CD4-positive, alpha-beta memory T cell (primary cell): ENCODE measurements at regions of chr1 and their contacts with region 1.

Region 1: DNA sequence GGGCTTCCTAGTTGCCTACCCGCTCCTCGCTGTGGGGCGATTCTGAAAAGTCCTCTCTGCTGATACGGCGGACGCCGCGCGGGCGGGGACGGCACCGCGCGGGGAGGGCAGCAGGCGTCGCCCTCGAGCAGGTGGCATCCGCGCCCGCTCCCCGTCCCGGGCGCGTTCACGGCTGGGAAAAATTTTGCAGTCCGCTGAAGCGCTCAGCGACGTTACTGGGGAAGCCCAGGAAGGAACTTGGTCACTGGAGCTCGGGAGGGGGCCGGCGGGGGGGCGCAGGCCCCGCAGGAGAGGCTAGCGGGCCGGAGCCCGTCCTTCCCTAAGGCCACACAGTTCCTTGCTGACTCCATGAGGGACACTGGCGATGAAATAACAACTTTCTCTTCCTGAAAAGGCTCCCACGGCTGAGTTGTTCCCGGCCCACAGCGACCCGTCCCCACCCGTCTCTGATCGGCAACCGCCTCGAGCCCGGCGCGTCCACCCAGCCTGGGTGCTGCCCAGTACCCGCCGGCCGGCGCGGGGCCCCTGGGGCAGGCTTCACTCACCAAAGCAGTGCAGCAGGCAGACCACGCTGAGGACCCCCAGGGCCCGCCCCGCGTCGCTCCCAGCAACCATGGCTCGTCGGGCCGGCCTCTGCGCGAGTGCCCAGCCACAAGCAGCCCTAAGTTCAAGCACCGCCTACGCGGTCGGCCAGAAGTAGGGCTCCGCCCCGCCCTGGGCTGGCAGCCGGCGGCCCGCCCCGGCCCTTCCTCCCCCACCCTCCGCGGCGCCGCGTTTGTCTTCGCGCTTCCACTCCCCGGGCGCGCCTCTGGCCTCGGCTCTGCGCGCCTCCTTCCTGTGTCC is at the start of gene CD58:
- DNase-seq: peak; percentile 74 to 81 (median 75)
- H3K4me3 ChIP-seq: peak within 1 kb of the TSS; percentile 80 to 93
- H3K4me3 Mint-ChIP-seq: peak within 1 kb of the TSS; percentile 89 to 99 (median 94)
- H3K27ac ChIP-seq: peak within 1 kb of the TSS; percentile 93
- H3K27ac Mint-ChIP-seq: peak within 1 kb of the TSS; percentile 90 to 98 (median 97)
- H3K4me1 ChIP-seq: peaks cover 62% of the 10 kb centered on the region
- H3K4me1 Mint-ChIP-seq: peaks cover 35 to 64% (median 49%) of the 10 kb centered on the region in 4 donors
- H3K27me3 ChIP-seq: no peaks in the 10 kb centered on the region
- H3K27me3 Mint-ChIP-seq: peaks cover 0 to 2% of the 10 kb centered on the region in 2 donors
- total RNA-seq, gene CD58: 25.2 to 30.9 TPM

Region 2: DNA sequence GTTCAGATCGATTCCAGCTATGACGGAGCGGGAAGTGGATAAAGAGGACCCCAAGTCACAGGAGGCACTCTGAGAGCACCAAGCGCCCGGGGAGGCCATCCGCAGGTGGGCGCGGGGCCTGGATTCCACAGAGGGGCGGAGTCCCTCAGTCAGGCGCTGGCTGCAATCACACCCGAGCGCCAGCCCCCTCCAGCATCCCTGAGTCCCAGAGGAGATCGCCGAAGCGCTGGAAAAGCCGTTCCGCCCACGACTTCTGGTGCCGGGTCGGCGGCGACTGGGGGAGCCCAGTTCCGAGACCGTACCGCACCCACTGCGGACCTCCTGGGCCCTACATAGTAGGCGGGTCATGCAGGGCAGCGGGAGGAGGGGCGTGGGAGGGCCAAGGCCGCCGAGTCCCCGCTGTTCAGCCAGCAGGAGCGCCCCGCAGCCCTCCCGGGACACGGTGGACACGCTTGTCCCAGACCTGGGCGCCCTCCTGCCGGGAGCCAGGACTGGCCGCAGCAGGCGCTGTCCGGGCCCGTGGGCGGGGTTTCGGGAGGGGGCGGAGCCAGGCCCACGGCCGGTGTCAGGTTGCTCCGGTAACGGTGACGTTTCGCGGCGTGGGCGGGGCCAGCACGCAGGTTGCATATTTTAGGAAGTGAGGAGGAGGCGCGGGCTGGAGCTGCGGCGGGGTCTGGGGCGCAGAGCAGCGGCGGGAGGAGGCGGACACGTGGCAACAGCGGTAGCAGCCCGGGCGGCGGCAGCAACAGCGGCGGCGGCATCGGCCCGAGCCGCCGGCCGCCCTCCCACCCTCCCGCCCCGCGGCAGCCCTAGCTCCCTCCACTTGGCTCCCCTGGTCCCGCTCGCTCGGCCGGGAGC is 197.8 kb before region 1 on chr1 and contains the start of gene ATP1A1:
- CTCF ChIA-PET with region 1: no interaction called
- POLR2A ChIA-PET with region 1: interaction called, 5 read pairs
- intact Hi-C with region 1: loop called (anchors 2 kb)
- DNase-seq: peak; percentile 96 to 97 (median 96)
- H3K4me3 ChIP-seq: peak within 1 kb of the TSS; percentile 82 to 96
- H3K4me3 Mint-ChIP-seq: peak within 1 kb of the TSS; percentile 95 to 99 (median 98)
- H3K27ac ChIP-seq: peak within 1 kb of the TSS; percentile 71
- H3K27ac Mint-ChIP-seq: peak within 1 kb of the TSS; percentile 92 to 99 (median 97)
- H3K4me1 ChIP-seq: peaks cover 49% of the 10 kb centered on the region
- H3K4me1 Mint-ChIP-seq: peaks cover 27 to 55% (median 38%) of the 10 kb centered on the region in 4 donors
- H3K27me3 ChIP-seq: no peaks in the 10 kb centered on the region
- H3K27me3 Mint-ChIP-seq: peaks cover 1% of the 10 kb centered on the region in 2 donors
- total RNA-seq, gene ATP1A1: 251 to 256 TPM

Region 3: GRCh38 chr1:116504308-116505156 is 66.0 kb before region 1 on chr1:
- CTCF ChIA-PET with region 1: interaction called, 19 read pairs
- POLR2A ChIA-PET with region 1: interaction called, 23 read pairs
- intact Hi-C with region 1: loop called (anchors 1 kb)
- DNase-seq: peak; percentile 85 to 98 (median 89)
- H3K4me3 ChIP-seq: no peak overlapping the region
- H3K4me3 Mint-ChIP-seq: peak overlapping the region in 7 of 8 donors; percentile 17 to 75 (median 67)
- H3K27ac ChIP-seq: peak overlapping the region; percentile 86
- H3K27ac Mint-ChIP-seq: peak overlapping the region; percentile 91 to 98 (median 94)
- H3K4me1 ChIP-seq: peaks cover 78% of the 10 kb centered on the region
- H3K4me1 Mint-ChIP-seq: peaks cover 48 to 86% (median 63%) of the 10 kb centered on the region in 4 donors
- H3K27me3 ChIP-seq: no peaks in the 10 kb centered on the region
- H3K27me3 Mint-ChIP-seq: no peaks in the 10 kb centered on the region

Region 4: DNA sequence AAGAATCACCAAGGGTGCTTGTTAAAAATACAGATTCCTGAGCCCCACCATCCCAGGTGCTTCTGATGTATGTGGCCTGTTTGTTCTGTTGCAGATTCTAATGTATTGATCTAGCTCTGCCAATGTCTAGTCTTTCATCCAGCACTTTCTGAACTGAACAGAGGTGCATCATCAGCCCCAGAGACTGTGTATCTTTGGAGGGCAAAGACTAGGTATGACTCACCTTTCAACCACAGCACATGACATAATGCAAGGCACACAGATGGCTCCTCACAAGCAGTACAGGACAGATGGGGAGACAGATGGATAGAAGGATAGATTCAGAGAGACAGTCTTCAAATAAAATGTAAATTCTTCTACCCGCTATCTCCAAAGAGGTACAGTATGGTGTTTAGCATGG is 32.0 kb before region 1 on chr1:
- CTCF ChIA-PET with region 1: interaction called, 5 read pairs
- POLR2A ChIA-PET with region 1: no interaction called
- intact Hi-C with region 1: loop called (anchors 5 kb)
- DNase-seq: peak in 1 of 5 donors; percentile 67
- H3K4me3 ChIP-seq: no peak overlapping the region
- H3K4me3 Mint-ChIP-seq: no peak overlapping the region
- H3K27ac ChIP-seq: no peak overlapping the region
- H3K27ac Mint-ChIP-seq: peak overlapping the region in 6 of 7 donors; percentile 13 to 82 (median 55)
- H3K4me1 ChIP-seq: peaks cover 34% of the 10 kb centered on the region
- H3K4me1 Mint-ChIP-seq: peaks cover 25 to 52% (median 37%) of the 10 kb centered on the region in 4 donors
- H3K27me3 ChIP-seq: no peaks in the 10 kb centered on the region
- H3K27me3 Mint-ChIP-seq: no peaks in the 10 kb centered on the region

Region 5: GRCh38 chr1:116674011-116674531 is 103.5 kb after region 1 on chr1:
- CTCF ChIA-PET with region 1: interaction called, 15 read pairs
- POLR2A ChIA-PET with region 1: no interaction called
- intact Hi-C with region 1: loop called (anchors 1 kb)
- DNase-seq: no peak
- H3K4me3 ChIP-seq: no peak overlapping the region
- H3K4me3 Mint-ChIP-seq: no peak overlapping the region
- H3K27ac ChIP-seq: no peak overlapping the region
- H3K27ac Mint-ChIP-seq: peak overlapping the region in 1 of 7 donors; percentile 48
- H3K4me1 ChIP-seq: no peaks in the 10 kb centered on the region
- H3K4me1 Mint-ChIP-seq: peaks cover 0 to 4% (median 3%) of the 10 kb centered on the region in 4 donors
- H3K27me3 ChIP-seq: no peaks in the 10 kb centered on the region
- H3K27me3 Mint-ChIP-seq: peaks cover 10 to 14% of the 10 kb centered on the region in 2 donors

Region 6: DNA sequence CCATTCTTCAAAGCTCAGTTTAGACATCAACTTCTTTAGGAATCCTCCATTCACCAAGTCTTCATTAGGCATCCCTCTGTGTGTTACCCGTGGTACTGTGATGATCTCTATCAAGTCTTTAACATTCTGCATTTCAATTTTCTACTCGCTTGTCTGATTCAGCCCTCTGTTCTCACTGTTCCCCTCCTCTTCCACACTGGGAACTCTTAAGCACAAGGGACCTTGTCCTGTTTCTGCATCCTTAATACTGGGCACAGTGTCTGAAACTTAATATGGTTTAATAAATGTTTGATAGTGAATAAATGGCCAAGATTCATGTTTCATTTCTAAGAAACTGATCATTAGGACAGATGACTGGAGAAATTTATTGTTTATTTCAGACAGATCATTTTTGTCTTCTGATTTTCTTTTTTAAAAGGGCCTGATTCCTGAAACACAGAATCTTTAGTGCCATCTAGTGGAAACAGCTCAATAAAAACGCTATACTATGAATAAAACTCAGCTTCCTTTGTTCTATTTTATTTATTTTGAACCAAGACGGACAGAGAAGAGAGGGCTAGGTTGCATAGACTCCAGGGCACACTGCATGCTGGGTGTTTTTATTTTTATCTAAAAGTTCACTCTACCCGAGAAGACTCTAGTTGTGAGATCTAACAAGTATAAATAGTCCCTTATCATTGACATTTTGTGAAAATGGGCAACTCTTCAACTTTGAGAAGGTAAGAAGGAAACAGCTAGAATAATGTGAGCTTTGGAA is 557.9 kb after region 1 on chr1:
- CTCF ChIA-PET with region 1: interaction called, 4 read pairs
- POLR2A ChIA-PET with region 1: no interaction called
- intact Hi-C with region 1: loop called (anchors 1 kb)
- DNase-seq: peak in 4 of 5 donors; percentile 28 to 38 (median 33)
- H3K4me3 ChIP-seq: no peak overlapping the region
- H3K4me3 Mint-ChIP-seq: no peak overlapping the region
- H3K27ac ChIP-seq: no peak overlapping the region
- H3K27ac Mint-ChIP-seq: peak overlapping the region in 1 of 7 donors; percentile 8
- H3K4me1 ChIP-seq: no peaks in the 10 kb centered on the region
- H3K4me1 Mint-ChIP-seq: peaks cover 0 to 5% (median 2%) of the 10 kb centered on the region in 4 donors
- H3K27me3 ChIP-seq: no peaks in the 10 kb centered on the region
- H3K27me3 Mint-ChIP-seq: peaks cover 7 to 16% of the 10 kb centered on the region in 2 donors